Ascending aorta (tissue), 2 donors: ENCODE measurements at regions of chr3 and their contacts with region 1.

Region 1: DNA sequence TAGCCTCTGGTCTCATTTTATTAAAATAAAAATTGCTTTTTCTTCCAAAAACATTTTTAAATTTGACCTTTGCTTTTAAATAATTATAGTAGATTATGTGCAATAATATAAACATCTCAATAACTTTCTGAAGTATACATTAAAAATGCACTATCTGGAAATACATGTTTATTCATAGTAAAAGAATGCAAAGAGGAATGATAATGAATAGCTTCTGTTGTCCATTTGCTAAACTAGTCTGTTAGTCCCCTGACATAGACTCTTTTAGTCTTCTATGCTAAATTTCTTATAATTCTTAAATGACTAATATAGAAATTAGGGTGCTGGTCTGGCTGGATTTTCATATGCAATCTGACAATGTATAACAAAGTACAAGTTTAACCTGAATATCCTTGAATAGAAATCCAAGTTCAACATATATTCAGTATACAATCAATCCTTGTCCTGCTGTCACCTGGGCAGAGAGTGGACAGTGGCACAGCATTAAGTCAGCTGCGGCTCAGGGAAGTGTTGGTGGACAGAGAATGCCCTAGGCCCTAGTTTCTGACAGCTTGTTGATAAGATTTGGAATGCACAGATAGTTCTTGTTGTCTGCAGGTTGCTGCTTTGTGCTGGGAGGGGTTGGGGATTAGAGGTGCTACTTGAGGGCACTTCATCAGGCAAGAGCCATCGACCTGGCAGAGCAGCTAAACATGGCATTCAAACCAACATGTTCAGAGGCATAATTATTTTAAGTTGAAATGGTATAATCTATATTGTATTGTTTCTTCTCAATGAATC is 161.7 kb downstream of the MBNL1 start:
- DNase-seq: no peak
- H3K4me3 ChIP-seq: no peak overlapping the region
- H3K27ac ChIP-seq: peak overlapping the region; percentile 9 to 41
- H3K4me1 ChIP-seq: peaks cover 0 to 2% of the 10 kb centered on the region in 2 donors
- H3K27me3 ChIP-seq: no peaks in the 10 kb centered on the region
- CTCF ChIP-seq: no peak

Region 2: DNA sequence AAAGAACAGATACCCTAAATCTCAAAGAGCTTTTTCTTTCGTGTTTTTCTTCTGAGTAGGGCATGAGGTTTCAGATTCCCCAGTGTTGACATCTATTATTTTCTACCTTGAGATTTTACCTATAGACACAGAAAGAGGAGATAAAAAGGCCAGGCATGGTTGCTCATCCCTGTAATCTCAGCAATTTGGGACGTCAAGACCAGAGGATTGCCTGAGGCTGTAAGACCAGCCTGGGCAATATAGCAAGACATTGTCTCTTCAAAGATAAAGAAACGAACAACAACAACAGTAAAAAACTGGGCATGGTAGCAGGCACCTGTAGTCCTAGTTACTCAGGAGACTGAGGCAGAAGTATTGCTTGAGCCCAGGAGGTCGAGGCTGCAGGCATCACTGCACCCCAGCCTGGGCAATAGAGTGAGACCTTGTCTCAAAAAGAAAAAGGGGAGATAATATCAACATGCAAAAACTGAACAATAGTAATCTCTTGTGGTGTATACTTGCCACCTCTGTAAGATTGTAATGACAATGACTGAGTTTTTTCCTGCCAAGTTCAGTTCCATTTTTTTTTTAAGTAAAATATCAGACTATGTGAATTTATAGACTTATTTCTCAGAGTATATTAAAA is 90.4 kb before region 1 on chr3:
- intact Hi-C with region 1: loop called (anchors 5 kb)
- DNase-seq: no peak
- H3K4me3 ChIP-seq: no peak overlapping the region
- H3K27ac ChIP-seq: peak overlapping the region in 1 of 2 donors; percentile 40
- H3K4me1 ChIP-seq: peaks cover 7 to 38% of the 10 kb centered on the region in 2 donors
- H3K27me3 ChIP-seq: no peaks in the 10 kb centered on the region
- CTCF ChIP-seq: no peak